Left lung (tissue), 14 donors: ENCODE measurements at regions of chr2 and their contacts with region 1.

Region 1: DNA sequence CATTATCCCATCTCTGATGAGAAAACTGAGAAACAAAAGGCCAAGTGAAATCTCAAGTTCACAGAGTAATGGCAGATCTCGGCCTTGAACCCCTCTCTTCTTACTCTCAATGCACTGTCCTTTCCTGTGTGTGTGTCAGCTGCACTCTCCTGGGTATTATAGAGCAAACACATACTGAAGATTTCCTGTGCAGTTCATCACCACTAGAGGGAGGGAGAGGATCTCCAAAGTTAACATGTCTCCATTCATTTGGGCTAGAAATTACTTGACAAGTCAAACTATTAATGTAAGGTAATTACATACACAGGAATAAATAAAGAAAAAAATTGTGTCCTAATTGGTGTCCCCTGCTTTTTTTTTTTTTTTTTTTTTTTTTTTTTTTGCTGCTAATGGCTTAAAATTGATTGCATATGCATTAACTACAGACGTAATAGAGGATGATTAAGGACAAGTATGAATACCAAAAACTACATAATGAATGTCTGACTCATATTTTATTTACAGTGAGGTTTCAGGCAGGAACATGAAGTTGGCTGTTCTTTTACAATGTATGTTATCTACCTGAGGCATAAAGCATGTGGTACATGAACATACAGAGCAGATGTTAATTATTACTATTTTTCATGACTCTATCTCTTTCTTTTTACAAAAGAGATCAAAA is 269.2 kb downstream of the NYAP2 start:
- DNase-seq: peak in 2 of 4 donors; percentile 54 to 74
- ATAC-seq: peak; percentile 83
- H3K4me3 ChIP-seq: no peak overlapping the region
- H3K27ac ChIP-seq: no peak overlapping the region
- H3K4me1 ChIP-seq: no peaks in the 10 kb centered on the region
- H3K27me3 ChIP-seq: no peaks in the 10 kb centered on the region
- CTCF ChIP-seq: peak; percentile 54 to 59

Region 2: DNA sequence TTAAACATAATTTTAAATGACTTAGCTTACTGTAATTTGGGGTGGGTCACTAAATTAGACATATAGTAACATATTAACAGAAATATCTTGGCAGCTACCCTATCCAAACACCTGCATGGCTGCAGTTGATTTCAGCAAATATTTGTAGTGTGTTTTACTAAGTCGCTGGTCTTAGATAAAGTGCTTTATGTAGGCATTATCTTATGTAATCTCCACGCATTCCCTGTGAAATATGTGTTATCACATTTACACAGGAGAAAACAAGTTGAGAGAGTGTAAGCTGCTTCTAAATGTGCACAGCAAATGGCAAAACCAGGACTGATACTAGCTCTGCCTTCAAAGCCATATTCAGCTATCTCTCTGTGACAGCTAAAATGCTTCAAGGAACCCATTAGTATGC is 197.3 kb before region 1 on chr2:
- intact Hi-C with region 1: no loop called
- DNase-seq: no peak
- ATAC-seq: peak; percentile 78
- H3K4me3 ChIP-seq: no peak overlapping the region
- H3K27ac ChIP-seq: no peak overlapping the region
- H3K4me1 ChIP-seq: no peaks in the 10 kb centered on the region
- H3K27me3 ChIP-seq: no peaks in the 10 kb centered on the region
- CTCF ChIP-seq: no peak

Region 3: GRCh38 chr2:226800941-226801784 is 1132.4 kb after region 1 on chr2:
- intact Hi-C with region 1: loop called in 1 of 2 experiments (anchors 5 kb)
- DNase-seq: peak in 3 of 4 donors; percentile 84 to 92 (median 89)
- ATAC-seq: peak; percentile 82
- H3K4me3 ChIP-seq: peak overlapping the region; percentile 57 to 68
- H3K27ac ChIP-seq: peak overlapping the region in 1 of 2 donors; percentile 91
- H3K4me1 ChIP-seq: peaks cover 6 to 49% of the 10 kb centered on the region in 2 donors
- H3K27me3 ChIP-seq: peaks cover 0 to 85% of the 10 kb centered on the region in 2 donors
- CTCF ChIP-seq: no peak

Region 4: GRCh38 chr2:226984750-226985582 is 1316.2 kb after region 1 on chr2:
- intact Hi-C with region 1: loop called in 1 of 2 experiments (anchors 5 kb)
- DNase-seq: peak in 2 of 4 donors; percentile 84 to 91
- ATAC-seq: peak; percentile 87
- H3K4me3 ChIP-seq: no peak overlapping the region
- H3K27ac ChIP-seq: peak overlapping the region in 1 of 2 donors; percentile 36
- H3K4me1 ChIP-seq: no peaks in the 10 kb centered on the region
- H3K27me3 ChIP-seq: no peaks in the 10 kb centered on the region
- CTCF ChIP-seq: peak; percentile 32 to 55